Panc1 (cell line): ENCODE measurements at regions of chr4 and their contacts with region 1.

Region 1: DNA sequence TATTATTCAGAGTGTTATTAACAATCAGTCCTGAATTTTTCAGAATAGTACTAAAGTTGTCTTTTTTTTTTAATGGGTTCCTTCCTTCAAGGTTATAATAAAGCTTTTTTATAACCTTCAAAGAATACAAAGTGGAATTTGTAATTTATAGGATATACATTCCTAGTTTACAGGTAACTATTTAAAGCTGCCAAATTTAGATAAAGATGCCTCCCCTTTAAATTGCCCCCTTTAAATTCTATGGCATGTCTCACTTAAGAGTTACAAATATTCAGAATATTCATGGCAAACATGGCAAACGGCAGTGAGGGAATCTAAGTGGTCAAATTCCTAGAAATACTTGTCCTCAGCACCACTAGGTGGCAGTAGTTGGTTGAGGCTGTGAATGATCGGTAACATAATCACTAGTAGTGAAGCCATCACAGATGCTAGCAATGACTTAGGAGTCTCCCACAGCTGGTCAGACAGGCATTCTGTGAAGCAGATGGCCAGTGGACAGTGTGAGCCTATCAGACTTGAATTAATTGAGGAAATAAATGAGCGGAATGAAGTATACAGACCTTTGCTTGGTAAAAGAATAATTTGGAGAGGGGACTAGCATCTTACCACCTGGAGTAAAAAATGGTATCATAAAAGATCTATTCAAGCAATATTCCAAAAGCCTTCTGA is 86.4 kb downstream of the CBR4 start:
- DNase-seq: peak; percentile 25
- ATAC-seq: peak; percentile 87
- H3K4me3 ChIP-seq: no peak overlapping the region
- H3K27ac ChIP-seq: no peak overlapping the region
- H3K4me1 ChIP-seq: no peaks in the 10 kb centered on the region
- H3K27me3 ChIP-seq: no peaks in the 10 kb centered on the region
- CTCF ChIP-seq: peak; percentile 80

Region 2: DNA sequence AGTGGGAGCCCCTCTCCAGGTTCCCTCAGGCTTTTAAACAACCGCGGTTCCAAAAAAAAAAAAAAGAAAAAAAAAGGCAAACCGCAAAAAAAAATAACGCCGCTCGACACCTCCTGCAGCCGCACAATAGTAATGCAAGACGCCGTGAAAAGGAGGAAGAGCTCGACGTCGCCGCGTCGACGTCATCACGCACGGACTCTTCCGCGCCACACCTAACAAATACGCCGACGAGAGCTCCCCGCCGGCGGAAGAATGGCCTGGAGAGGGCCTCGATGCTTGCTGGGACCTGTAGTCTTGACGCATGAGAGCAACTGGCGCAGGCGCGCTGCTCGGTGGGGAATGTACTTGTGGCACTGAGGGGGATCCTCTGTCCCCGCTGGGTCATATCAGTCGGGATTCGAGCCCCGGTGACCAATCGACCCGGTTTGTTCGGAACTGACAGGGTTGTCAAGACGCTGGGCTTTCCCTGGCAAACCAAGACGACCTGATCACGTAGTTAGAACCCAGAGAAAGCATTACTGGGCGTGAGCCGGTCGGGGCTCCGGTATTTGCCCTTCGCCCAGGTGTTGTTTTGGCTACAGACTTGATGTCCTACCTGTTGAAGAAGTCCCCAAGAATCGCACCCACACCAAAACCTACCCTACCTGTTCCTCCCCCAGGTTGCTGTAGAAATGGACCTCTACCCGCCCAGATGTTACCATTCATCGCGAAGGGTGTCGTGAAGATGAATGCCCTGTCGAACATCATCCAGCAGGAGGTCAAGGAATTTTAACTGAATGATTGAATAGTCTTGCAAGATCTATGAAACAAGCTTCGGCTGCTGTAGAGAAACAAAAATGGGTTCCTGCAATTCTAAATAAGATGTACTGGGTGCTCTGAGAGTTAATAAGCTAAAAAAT is 86.7 kb after region 1 on chr4 and contains the start of gene CBR4:
- CTCF ChIA-PET with region 1: interaction called, 3 read pairs
- POLR2A ChIA-PET with region 1: no interaction called
- in situ Hi-C with region 1: no loop called
- intact Hi-C with region 1: loop called (anchors 5 kb)
- DNase-seq: peak; percentile 86
- ATAC-seq: peak; percentile 99
- H3K4me3 ChIP-seq: peak within 1 kb of the TSS; percentile 74 to 87
- H3K27ac ChIP-seq: peak within 1 kb of the TSS; percentile 89
- H3K4me1 ChIP-seq: peaks cover 11% of the 10 kb centered on the region; the same call in 1 of the 2 replicates
- H3K27me3 ChIP-seq: no peaks in the 10 kb centered on the region
- CTCF ChIP-seq: peak; percentile 32; the same call in 1 of the 2 replicates
- total RNA-seq, gene CBR4: 13.5 TPM

Region 3: DNA sequence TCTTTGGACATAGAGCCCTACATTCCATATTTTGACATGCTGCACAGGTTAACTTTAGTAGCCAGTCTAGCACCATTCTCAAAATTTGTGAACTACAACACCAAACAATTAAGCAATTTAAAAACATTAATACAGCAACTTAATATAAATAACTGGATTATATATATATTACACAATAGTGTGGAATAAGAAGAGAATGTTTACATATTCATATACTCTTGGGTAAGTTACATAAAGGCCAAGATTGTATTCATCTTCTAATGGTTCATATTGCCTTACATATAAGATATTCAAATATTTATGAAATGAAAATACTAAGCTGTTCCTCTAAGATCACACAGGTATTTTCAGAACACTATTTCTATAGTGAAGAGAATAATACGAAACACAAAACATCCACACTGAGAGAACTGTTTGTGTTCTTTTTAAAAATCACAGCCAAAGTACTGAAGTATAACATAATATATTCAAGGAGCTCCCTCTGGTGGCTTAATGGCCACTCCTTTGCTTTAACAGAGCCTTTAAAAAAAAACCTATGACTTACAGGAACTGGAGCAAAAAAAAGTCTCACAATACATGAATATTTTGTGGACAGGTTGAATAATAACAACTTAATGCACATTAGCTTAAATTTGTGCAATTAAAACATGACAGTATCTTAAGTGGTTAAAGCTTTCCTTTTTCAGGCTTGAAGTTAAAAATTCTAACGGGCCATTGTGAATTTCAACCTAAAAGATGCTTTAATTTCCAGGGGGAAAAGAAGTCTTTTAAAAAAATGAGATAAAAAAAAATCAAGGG is 642.6 kb after region 1 on chr4:
- CTCF ChIA-PET with region 1: interaction called, 3 read pairs
- POLR2A ChIA-PET with region 1: no interaction called
- in situ Hi-C with region 1: no loop called
- intact Hi-C with region 1: loop called (anchors 2 kb)
- DNase-seq: no peak
- ATAC-seq: no peak
- H3K4me3 ChIP-seq: no peak overlapping the region
- H3K27ac ChIP-seq: no peak overlapping the region
- H3K4me1 ChIP-seq: no peaks in the 10 kb centered on the region
- H3K27me3 ChIP-seq: no peaks in the 10 kb centered on the region
- CTCF ChIP-seq: peak; percentile 69; the same call in 1 of the 2 replicates